Gastrocnemius medialis (tissue), 4 donors: ENCODE measurements at regions of chr5 and their contacts with region 1.

Region 1: GRCh38 chr5:179345433-179346321 is at the start of gene ADAMTS2:
- DNase-seq: peak in 1 of 2 donors; percentile 34
- ATAC-seq: peak; percentile 47 to 60
- H3K4me3 ChIP-seq: peak within 1 kb of the TSS; percentile 52 to 61 (median 56)
- H3K27ac ChIP-seq: peak within 1 kb of the TSS in 3 of 4 donors; percentile 46 to 52 (median 47)
- H3K4me1 ChIP-seq: peaks cover 7 to 12% of the 10 kb centered on the region in 2 donors
- H3K27me3 ChIP-seq: peaks cover 21 to 30% (median 22%) of the 10 kb centered on the region in 3 donors
- CTCF ChIP-seq: no peak
- POLR2A ChIP-seq: no peak
- total RNA-seq, gene ADAMTS2: 0.78 to 3.8 (median 2.0) TPM

Region 2: GRCh38 chr5:179265514-179266290 is 80.0 kb before region 1 on chr5:
- in situ Hi-C with region 1: no loop called
- intact Hi-C with region 1: loop called (anchors 2 kb)
- DNase-seq: peak; percentile 92 to 95
- ATAC-seq: peak; percentile 86 to 93
- H3K4me3 ChIP-seq: peak overlapping the region in 2 of 4 donors; percentile 21 to 37
- H3K27ac ChIP-seq: peak overlapping the region; percentile 58 to 74 (median 70)
- H3K4me1 ChIP-seq: peaks cover 12 to 30% of the 10 kb centered on the region in 2 donors
- H3K27me3 ChIP-seq: no peaks in the 10 kb centered on the region
- CTCF ChIP-seq: no peak
- POLR2A ChIP-seq: no peak

Region 3: GRCh38 chr5:179495906-179496455 is 150.3 kb after region 1 on chr5:
- in situ Hi-C with region 1: no loop called
- intact Hi-C with region 1: loop called (anchors 5 kb)
- DNase-seq: no peak
- ATAC-seq: no peak
- H3K4me3 ChIP-seq: no peak overlapping the region
- H3K27ac ChIP-seq: no peak overlapping the region
- H3K4me1 ChIP-seq: no peaks in the 10 kb centered on the region
- H3K27me3 ChIP-seq: no peaks in the 10 kb centered on the region
- CTCF ChIP-seq: no peak
- POLR2A ChIP-seq: no peak